WTC11 (cell line): ENCODE measurements at regions of chr1 and their contacts with region 1.

Region 1: GRCh38 chr1:17606826-17607440 is 67.4 kb downstream of the ARHGEF10L start:
- DNase-seq: peak; percentile 88
- ATAC-seq: peak; percentile 65
- H3K4me3 Mint-ChIP-seq: no peak overlapping the region
- H3K27ac Mint-ChIP-seq: no peak overlapping the region; the same call in none of the 2 replicates
- H3K4me1 Mint-ChIP-seq: peaks cover 22% of the 10 kb centered on the region
- H3K27me3 Mint-ChIP-seq: no peaks in the 10 kb centered on the region
- CTCF ChIP-seq: peak; percentile 91

Region 2: GRCh38 chr1:17502326-17502778 is 104.6 kb before region 1 on chr1:
- CTCF ChIA-PET with region 1: interaction called, 273 read pairs
- POLR2A ChIA-PET with region 1: no interaction called
- DNase-seq: peak; percentile 97
- ATAC-seq: peak; percentile 99
- H3K4me3 Mint-ChIP-seq: no peak overlapping the region
- H3K27ac Mint-ChIP-seq: no peak overlapping the region
- H3K4me1 Mint-ChIP-seq: peaks cover 7% of the 10 kb centered on the region; the same call in 1 of the 2 replicates
- H3K27me3 Mint-ChIP-seq: 0 out of 2 replicates have a peak, but pooled peaks cover 4% of the 10 kb centered on the region
- CTCF ChIP-seq: peak; percentile 97

Region 3: DNA sequence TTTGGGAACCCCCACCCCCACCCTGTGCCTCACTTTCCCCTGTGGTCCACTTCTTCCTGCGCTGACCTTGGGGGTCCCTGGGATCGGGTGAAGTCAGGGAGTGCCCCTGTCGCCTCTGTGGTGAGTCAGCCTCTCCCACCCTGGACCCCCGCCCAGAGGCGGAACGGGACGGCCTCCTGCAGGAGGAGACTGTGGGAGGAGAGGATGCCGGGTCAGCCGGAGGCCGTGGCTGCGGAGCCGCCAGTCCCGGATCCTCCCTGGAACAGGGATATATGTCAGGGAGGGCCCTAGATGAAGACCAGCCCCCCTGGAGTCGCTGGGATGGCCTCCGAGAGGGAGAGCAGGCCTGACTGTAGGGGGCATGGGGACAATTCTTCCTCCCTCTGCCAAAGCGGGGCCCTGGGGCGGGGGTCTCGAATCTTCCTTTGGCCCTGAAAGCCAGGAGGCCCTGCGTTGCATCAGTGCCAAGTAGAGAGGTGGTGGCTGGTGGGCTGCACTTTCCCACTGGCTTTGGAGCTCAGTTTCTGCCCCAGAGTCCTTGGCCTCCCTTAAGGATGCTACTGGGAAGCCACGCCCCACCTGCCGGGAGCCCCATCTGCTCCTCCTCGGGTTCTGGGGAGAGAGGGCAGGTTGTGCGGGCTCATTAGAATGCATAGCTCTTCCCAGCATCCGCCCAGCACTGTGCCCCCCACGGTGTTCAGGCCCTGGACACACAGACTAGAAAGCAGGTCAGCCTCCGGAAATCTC is 66.5 kb before region 1 on chr1:
- CTCF ChIA-PET with region 1: interaction called, 26 read pairs
- POLR2A ChIA-PET with region 1: interaction called, 3 read pairs
- DNase-seq: peak; percentile 95
- ATAC-seq: peak; percentile 80
- H3K4me3 Mint-ChIP-seq: peak overlapping the region; percentile 83
- H3K27ac Mint-ChIP-seq: peak overlapping the region; percentile 88
- H3K4me1 Mint-ChIP-seq: peaks cover 55% of the 10 kb centered on the region
- H3K27me3 Mint-ChIP-seq: no peaks in the 10 kb centered on the region
- CTCF ChIP-seq: no peak

Region 4: GRCh38 chr1:17569200-17570161 is 37.5 kb before region 1 on chr1:
- CTCF ChIA-PET with region 1: interaction called, 253 read pairs
- POLR2A ChIA-PET with region 1: interaction called, 4 read pairs
- DNase-seq: no peak
- ATAC-seq: no peak
- H3K4me3 Mint-ChIP-seq: no peak overlapping the region
- H3K27ac Mint-ChIP-seq: peak overlapping the region; percentile 89
- H3K4me1 Mint-ChIP-seq: peaks cover 88% of the 10 kb centered on the region
- H3K27me3 Mint-ChIP-seq: no peaks in the 10 kb centered on the region
- CTCF ChIP-seq: no peak

Region 5: DNA sequence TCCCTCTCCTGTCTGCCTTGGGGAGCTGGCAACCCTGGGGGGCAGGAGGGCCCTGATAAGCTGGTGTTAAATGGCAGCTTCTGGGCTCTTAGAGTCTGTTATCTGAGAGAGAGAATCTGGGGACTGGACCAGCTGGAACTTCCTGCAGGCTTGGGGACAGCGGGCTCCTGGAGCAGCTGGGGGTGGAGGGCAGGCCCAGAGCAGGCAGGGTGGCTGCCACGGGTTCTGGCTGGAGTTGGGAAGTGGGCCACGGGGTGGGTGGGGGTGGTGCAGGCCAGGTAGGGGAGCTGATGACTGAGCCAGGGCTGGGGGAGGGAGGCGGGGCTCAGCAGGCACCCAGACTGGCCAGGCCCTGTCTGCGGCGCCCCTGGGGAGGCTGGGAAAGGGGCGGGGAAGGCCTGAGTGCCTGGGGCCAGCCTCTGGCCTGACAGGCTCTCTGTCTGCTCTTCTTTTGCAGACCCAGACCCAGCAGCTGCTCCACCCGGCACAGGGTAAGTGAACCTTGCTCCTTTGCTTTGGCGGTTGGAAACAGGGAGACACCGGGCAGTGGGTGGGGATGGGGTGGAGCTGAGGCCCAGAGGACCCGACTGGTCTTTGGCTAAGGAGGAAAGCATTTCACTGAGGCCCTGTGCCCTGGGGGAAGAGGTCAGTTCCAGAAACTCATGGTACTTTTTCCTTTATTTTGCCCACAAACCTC is 18.8 kb before region 1 on chr1:
- CTCF ChIA-PET with region 1: interaction called, 97 read pairs
- POLR2A ChIA-PET with region 1: interaction called, 4 read pairs
- DNase-seq: peak; percentile 56
- ATAC-seq: peak; percentile 53
- H3K4me3 Mint-ChIP-seq: no peak overlapping the region
- H3K27ac Mint-ChIP-seq: peak overlapping the region; percentile 89
- H3K4me1 Mint-ChIP-seq: peaks cover 38% of the 10 kb centered on the region
- H3K27me3 Mint-ChIP-seq: no peaks in the 10 kb centered on the region
- CTCF ChIP-seq: no peak

Region 6: GRCh38 chr1:17617787-17618557 is 11.0 kb after region 1 on chr1:
- CTCF ChIA-PET with region 1: interaction called, 14 read pairs
- POLR2A ChIA-PET with region 1: no interaction called
- DNase-seq: no peak
- ATAC-seq: no peak
- H3K4me3 Mint-ChIP-seq: no peak overlapping the region
- H3K27ac Mint-ChIP-seq: no peak overlapping the region
- H3K4me1 Mint-ChIP-seq: no peaks in the 10 kb centered on the region
- H3K27me3 Mint-ChIP-seq: no peaks in the 10 kb centered on the region
- CTCF ChIP-seq: no peak

Region 7: GRCh38 chr1:17682399-17682798 is 75.5 kb after region 1 on chr1:
- CTCF ChIA-PET with region 1: no interaction called
- POLR2A ChIA-PET with region 1: no interaction called
- DNase-seq: no peak
- ATAC-seq: no peak
- H3K4me3 Mint-ChIP-seq: no peak overlapping the region
- H3K27ac Mint-ChIP-seq: peak overlapping the region; percentile 64
- H3K4me1 Mint-ChIP-seq: peaks cover 10% of the 10 kb centered on the region; the same call in 1 of the 2 replicates
- H3K27me3 Mint-ChIP-seq: no peaks in the 10 kb centered on the region
- CTCF ChIP-seq: no peak